ENCODE measurements at regions of chr13 and their contacts with region 1.

Region 1: DNA sequence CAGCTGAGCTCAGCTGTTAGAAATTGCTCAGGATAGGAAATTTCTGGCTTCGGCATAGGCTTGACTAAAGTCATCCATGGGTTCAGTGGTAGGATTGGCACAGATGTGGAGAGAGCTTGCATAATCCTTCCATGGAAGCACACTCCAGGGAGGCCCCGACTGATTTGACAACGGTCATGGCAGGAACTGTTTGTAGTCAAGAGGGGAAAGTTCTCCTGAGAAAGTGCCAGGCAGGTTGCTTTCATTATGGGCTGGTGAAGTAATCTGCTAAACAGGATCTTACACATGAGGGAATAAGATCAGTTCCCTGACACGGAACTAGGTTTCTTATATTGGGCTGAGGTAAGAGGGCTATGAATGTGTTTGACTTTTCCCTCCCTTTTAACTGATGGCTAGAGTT is 120.1 kb downstream of the RGCC start:
- DNase-seq: no peak
- ATAC-seq: no peak
- H3K4me3 ChIP-seq: no peak overlapping the region
- H3K27ac ChIP-seq: no peak overlapping the region
- H3K4me1 ChIP-seq: no peaks in the 10 kb centered on the region
- H3K27me3 ChIP-seq: no peaks in the 10 kb centered on the region
- CTCF ChIP-seq: no peak

Region 2: DNA sequence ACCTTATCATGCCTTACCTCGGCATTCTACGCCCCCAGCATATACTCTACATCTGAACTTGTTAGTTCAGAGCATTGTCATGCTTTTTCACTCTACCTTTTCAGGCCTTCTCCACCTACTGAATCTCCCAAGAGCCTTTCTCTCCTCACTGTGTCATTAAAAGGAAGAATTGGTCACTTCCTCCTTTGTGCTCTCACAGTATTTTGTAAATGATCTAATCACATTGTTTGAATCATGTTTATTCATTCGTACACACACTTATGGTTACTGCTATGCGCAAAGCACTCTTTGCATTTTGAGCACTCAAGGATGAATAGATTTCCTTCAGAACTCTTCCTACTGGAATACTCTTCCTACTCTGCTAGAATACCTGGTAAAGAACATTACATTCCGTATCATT is 542.6 kb before region 1 on chr13:
- CTCF ChIA-PET with region 1: no interaction called
- POLR2A ChIA-PET with region 1: no interaction called
- in situ Hi-C with region 1: no loop called
- intact Hi-C with region 1: no loop called
- DNase-seq: no peak
- ATAC-seq: no peak
- H3K4me3 ChIP-seq: no peak overlapping the region
- H3K27ac ChIP-seq: no peak overlapping the region
- H3K4me1 ChIP-seq: no peaks in the 10 kb centered on the region
- H3K27me3 ChIP-seq: no peaks in the 10 kb centered on the region
- CTCF ChIP-seq: no peak

Region 3: DNA sequence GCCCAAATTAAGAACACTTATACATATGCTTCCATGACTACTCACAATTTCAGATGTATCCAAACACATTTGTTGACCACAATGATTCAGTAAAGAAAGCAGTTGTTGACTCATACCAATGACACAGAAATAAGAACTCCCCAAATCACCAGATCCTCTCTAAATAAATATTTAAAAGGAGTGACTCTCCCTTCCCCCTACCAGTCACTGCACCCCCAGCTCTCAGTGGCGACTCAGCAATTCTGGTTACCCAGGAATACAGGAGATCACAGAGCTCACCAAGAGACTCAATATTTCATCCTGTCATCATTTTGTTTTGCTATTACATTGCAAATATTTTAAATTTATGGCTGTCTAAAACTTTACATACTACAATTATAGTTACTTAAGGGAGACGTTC is 11.5 kb after region 1 on chr13:
- CTCF ChIA-PET with region 1: interaction called, 3 read pairs
- POLR2A ChIA-PET with region 1: no interaction called
- in situ Hi-C with region 1: no loop called
- intact Hi-C with region 1: loop called (anchors 1 kb)
- DNase-seq: peak; percentile 77
- ATAC-seq: peak; percentile 69; the same call in 1 of the 2 replicates
- H3K4me3 ChIP-seq: no peak overlapping the region
- H3K27ac ChIP-seq: no peak overlapping the region
- H3K4me1 ChIP-seq: no peaks in the 10 kb centered on the region
- H3K27me3 ChIP-seq: no peaks in the 10 kb centered on the region
- CTCF ChIP-seq: no peak

Region 4: GRCh38 chr13:41603917-41604316 is 26.5 kb after region 1 on chr13:
- CTCF ChIA-PET with region 1: no interaction called
- POLR2A ChIA-PET with region 1: no interaction called
- in situ Hi-C with region 1: no loop called
- intact Hi-C with region 1: no loop called
- DNase-seq: peak; percentile 17
- ATAC-seq: no peak
- H3K4me3 ChIP-seq: no peak overlapping the region
- H3K27ac ChIP-seq: no peak overlapping the region
- H3K4me1 ChIP-seq: no peaks in the 10 kb centered on the region
- H3K27me3 ChIP-seq: no peaks in the 10 kb centered on the region
- CTCF ChIP-seq: no peak

Measured in Panc1 (cell line).